K562 (cell line): ENCODE measurements at regions of chr20 and their contacts with region 1.

Region 1: GRCh38 chr20:2651772-2652723 is at the start of gene NOP56:
- DNase-seq: peak; percentile 85 to 91 (median 88)
- ATAC-seq: peak; percentile 94
- H3K4me3 ChIP-seq: peak within 1 kb of the TSS; percentile 70
- H3K27ac ChIP-seq: peak within 1 kb of the TSS; percentile 94
- H3K4me1 ChIP-seq: peaks cover 19 to 22% of the 10 kb centered on the region in 2 experiments; a peak in 4 of 5 replicates
- H3K27me3 ChIP-seq: no peaks in the 10 kb centered on the region
- CTCF ChIP-seq: no peak
- EP300 ChIP-seq: no peak
- POLR2A ChIP-seq: peak; percentile 86
- RAD21 ChIP-seq: no peak
- polyA plus RNA-seq, gene NOP56: 295 to 439 TPM

Region 2: GRCh38 chr20:2379511-2380229 is 272.4 kb before region 1 on chr20:
- CTCF ChIA-PET with region 1: no interaction called
- POLR2A ChIA-PET with region 1: no interaction called
- in situ Hi-C with region 1: no loop called
- intact Hi-C with region 1: no loop called
- DNase-seq: no peak
- ATAC-seq: no peak
- H3K4me3 ChIP-seq: no peak overlapping the region
- H3K27ac ChIP-seq: no peak overlapping the region
- H3K4me1 ChIP-seq: no peaks in the 10 kb centered on the region
- H3K27me3 ChIP-seq: peaks cover 0 to 23% of the 10 kb centered on the region in 2 experiments; a peak in 2 of 5 replicates
- CTCF ChIP-seq: no peak
- EP300 ChIP-seq: no peak
- POLR2A ChIP-seq: no peak
- RAD21 ChIP-seq: no peak

Region 3: GRCh38 chr20:2523919-2524708 is 127.9 kb before region 1 on chr20:
- CTCF ChIA-PET with region 1: no interaction called
- POLR2A ChIA-PET with region 1: interaction called, 12 read pairs
- in situ Hi-C with region 1: no loop called
- intact Hi-C with region 1: loop called (anchors 5 kb)
- DNase-seq: peak; percentile 79 to 88 (median 83)
- ATAC-seq: peak; percentile 81
- H3K4me3 ChIP-seq: peak overlapping the region; percentile 66
- H3K27ac ChIP-seq: peak overlapping the region; percentile 94
- H3K4me1 ChIP-seq: peaks cover 9 to 16% of the 10 kb centered on the region in 2 experiments; a peak in 4 of 5 replicates
- H3K27me3 ChIP-seq: no peaks in the 10 kb centered on the region
- CTCF ChIP-seq: peak; percentile 76 to 88 (median 86)
- EP300 ChIP-seq: no peak
- POLR2A ChIP-seq: no peak
- RAD21 ChIP-seq: peak; percentile 28 to 46; a peak in 3 of 4 replicates

Region 4: DNA sequence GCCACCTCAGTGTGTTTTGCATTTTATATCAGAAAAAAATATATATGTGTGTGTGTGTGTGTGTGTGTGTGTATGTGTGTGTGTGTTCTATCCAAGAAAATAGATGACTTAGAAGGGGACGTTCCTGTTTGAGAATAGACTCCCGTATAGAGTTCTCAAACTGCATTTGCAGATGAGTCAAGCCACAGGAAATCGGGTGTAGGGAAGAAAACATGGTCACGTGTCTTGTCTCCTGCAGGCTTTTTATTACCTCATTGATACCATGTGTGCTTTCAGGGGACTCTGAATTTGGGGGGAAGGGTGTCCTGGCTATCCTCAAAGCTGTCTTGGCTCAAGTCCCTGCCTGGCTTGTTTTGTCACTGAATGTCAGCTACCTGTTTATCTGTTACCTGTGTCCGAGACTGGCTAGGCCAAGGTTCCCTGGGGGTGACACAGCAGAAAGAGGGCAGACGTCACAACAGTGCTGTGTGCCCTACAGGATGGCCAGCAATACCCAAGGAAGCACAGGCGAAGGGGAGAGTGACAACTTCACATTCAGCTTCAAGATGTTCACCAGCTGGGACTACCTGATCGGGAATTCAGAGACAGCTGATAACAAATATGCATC is 55.3 kb before region 1 on chr20:
- CTCF ChIA-PET with region 1: no interaction called
- POLR2A ChIA-PET with region 1: no interaction called
- in situ Hi-C with region 1: no loop called
- intact Hi-C with region 1: no loop called
- DNase-seq: no peak
- ATAC-seq: no peak
- H3K4me3 ChIP-seq: no peak overlapping the region
- H3K27ac ChIP-seq: no peak overlapping the region
- H3K4me1 ChIP-seq: no peaks in the 10 kb centered on the region; a peak in 1 of 5 replicates
- H3K27me3 ChIP-seq: peaks cover 0 to 19% of the 10 kb centered on the region in 2 experiments; a peak in 2 of 5 replicates
- CTCF ChIP-seq: no peak
- EP300 ChIP-seq: no peak
- POLR2A ChIP-seq: no peak
- RAD21 ChIP-seq: no peak

Region 5: GRCh38 chr20:2663887-2664719 is 12.1 kb after region 1 on chr20 and contains the start of gene IDH3B:
- CTCF ChIA-PET with region 1: no interaction called
- POLR2A ChIA-PET with region 1: interaction called, 46 read pairs
- in situ Hi-C with region 1: no loop called
- intact Hi-C with region 1: no loop called
- DNase-seq: peak; percentile 73 to 90 (median 78)
- ATAC-seq: peak; percentile 97
- H3K4me3 ChIP-seq: peak within 1 kb of the TSS; percentile 58
- H3K27ac ChIP-seq: peak within 1 kb of the TSS; percentile 95
- H3K4me1 ChIP-seq: peaks cover 0 to 2% of the 10 kb centered on the region in 2 experiments; a peak in 2 of 5 replicates
- H3K27me3 ChIP-seq: no peaks in the 10 kb centered on the region
- CTCF ChIP-seq: no peak
- EP300 ChIP-seq: peak; percentile 25
- POLR2A ChIP-seq: peak; percentile 85
- RAD21 ChIP-seq: no peak
- polyA plus RNA-seq, gene IDH3B: 91.7 to 92.3 TPM